Ovary (tissue), 10 donors: ENCODE measurements at regions of chr4 and their contacts with region 1.

Region 1: DNA sequence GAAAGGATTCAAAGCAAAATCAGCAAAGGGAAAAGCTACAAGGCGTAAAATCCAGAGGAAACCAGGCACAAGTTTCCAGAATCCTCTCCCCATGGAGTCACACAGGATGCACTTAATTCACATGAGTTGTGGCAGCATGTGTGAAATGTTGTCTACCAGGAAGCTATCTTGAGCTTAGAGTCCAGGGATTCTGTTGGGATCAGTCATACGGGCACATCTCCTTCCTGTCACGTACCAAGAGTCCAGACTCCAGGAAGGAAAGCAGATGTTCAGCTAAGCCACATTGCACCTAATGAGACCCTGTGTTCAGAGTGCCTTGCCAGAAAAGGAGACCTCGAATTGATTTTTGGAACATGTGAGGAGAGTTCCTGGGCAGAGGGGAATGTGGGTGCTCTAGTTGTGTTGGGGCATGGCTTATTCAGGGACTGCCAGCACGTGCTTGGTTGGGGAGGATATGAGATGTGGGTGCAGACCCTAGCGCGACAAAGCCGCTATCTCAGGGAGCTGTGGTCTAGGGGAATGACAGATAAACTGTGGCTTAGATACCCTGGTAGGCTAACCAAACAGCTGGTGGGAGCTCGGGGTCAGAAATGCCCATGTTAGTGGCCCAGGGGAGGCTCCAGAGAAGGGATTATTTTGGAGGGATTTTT is 70.0 kb downstream of the EVC start:
- DNase-seq: no peak
- H3K4me3 ChIP-seq: no peak overlapping the region
- H3K27ac ChIP-seq: no peak overlapping the region
- H3K4me1 ChIP-seq: no peaks in the 10 kb centered on the region
- H3K27me3 ChIP-seq: no peaks in the 10 kb centered on the region
- CTCF ChIP-seq: no peak
- EP300 ChIP-seq: no peak
- POLR2A ChIP-seq: no peak

Region 2: GRCh38 chr4:5900844-5901243 is 119.9 kb after region 1 on chr4:
- intact Hi-C with region 1: no loop called
- DNase-seq: no peak
- H3K4me3 ChIP-seq: no peak overlapping the region
- H3K27ac ChIP-seq: no peak overlapping the region
- H3K4me1 ChIP-seq: no peaks in the 10 kb centered on the region
- H3K27me3 ChIP-seq: no peaks in the 10 kb centered on the region
- CTCF ChIP-seq: no peak
- EP300 ChIP-seq: no peak
- POLR2A ChIP-seq: no peak

Region 3: DNA sequence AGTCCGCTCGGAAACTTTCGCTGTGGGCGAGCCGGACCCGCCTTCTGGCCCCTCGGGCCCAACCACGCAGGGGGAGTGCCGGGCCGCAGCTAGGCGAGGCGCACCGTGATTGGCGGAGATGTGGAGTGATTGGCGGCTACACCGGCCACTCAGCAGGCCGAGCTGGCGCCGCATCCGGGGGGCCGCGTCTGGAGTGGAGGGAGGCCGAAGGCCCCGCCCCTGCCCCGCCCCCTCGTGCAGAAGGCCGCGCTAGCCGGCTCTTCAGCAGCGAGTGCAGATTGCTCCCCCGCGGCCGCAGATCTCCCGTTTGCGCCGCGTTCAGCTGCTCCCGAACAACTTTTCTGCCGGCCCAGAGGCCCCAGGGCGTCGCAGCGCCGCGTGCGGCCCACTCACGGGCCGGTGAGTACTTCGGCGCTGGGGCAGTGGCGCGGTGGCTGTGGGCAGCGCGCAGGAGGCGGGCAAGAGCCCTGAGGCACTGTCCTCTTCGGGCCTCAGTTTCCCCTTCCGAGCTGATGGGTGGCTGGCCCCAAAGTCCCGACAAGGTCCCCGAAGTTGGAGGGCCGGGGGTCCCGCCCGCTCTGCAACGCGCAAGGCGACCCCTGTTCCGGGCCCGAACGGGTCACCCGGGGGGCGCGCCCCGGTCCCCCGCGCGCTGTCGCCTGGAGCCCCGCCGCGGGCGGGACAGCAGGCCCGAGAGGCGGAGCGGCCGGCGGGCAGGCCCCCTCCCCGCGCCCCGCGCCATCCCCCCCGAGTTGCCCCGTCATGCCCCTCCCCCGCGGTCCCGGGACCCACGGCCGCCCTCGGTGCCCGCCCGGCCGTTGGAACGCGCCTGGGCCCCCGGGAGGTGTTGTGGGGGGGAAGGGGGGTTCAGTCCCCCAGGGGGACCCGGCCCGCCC is 488.9 kb after region 1 on chr4 and contains the start of gene WFS1:
- intact Hi-C with region 1: no loop called
- DNase-seq: peak; percentile 99 to 100 (median 99)
- H3K4me3 ChIP-seq: peak within 1 kb of the TSS; percentile 96
- H3K27ac ChIP-seq: peak within 1 kb of the TSS; percentile 71 to 82
- H3K4me1 ChIP-seq: peaks cover 34% of the 10 kb centered on the region
- H3K27me3 ChIP-seq: no peaks in the 10 kb centered on the region
- CTCF ChIP-seq: no peak
- EP300 ChIP-seq: no peak
- POLR2A ChIP-seq: peak; percentile 76
- total RNA-seq, gene WFS1: 57.4 to 174 (median 140) TPM

Region 4: DNA sequence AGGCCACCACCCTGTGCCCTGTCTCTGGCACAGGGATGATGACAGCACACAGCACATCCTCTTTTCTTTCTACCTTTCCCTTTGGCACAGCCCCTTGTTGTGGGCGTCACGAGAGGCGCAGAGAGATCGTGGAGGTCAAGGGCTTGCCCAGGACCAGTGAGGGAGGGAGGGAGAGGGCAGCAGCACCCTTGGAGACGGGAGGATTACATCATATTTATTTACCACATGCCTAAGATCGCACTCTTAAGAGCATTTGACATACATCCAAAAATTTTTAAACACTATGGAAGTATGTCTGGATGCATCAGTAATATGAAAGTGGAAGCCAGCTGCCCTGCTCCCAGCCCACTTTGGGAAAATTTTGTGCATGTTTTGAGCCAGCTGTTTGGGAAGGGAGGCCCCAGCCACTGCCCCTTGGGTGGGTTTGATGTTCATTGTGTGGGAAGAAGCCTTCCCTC is 501.4 kb after region 1 on chr4:
- intact Hi-C with region 1: no loop called
- DNase-seq: peak; percentile 50 to 77 (median 58)
- H3K4me3 ChIP-seq: no peak overlapping the region
- H3K27ac ChIP-seq: peak overlapping the region in 1 of 2 donors; percentile 86
- H3K4me1 ChIP-seq: peaks cover 43% of the 10 kb centered on the region
- H3K27me3 ChIP-seq: no peaks in the 10 kb centered on the region
- CTCF ChIP-seq: no peak
- EP300 ChIP-seq: no peak
- POLR2A ChIP-seq: no peak

Region 5: GRCh38 chr4:7506119-7506518 is 1725.2 kb after region 1 on chr4:
- intact Hi-C with region 1: loop called in 1 of 4 experiments (anchors 5 kb)
- DNase-seq: no peak
- H3K4me3 ChIP-seq: no peak overlapping the region
- H3K27ac ChIP-seq: no peak overlapping the region
- H3K4me1 ChIP-seq: peaks cover 1% of the 10 kb centered on the region
- H3K27me3 ChIP-seq: no peaks in the 10 kb centered on the region
- CTCF ChIP-seq: no peak
- EP300 ChIP-seq: no peak
- POLR2A ChIP-seq: no peak